Ascending aorta (tissue), 2 donors: ENCODE measurements at regions of chr9 and their contacts with region 1.

Region 1: DNA sequence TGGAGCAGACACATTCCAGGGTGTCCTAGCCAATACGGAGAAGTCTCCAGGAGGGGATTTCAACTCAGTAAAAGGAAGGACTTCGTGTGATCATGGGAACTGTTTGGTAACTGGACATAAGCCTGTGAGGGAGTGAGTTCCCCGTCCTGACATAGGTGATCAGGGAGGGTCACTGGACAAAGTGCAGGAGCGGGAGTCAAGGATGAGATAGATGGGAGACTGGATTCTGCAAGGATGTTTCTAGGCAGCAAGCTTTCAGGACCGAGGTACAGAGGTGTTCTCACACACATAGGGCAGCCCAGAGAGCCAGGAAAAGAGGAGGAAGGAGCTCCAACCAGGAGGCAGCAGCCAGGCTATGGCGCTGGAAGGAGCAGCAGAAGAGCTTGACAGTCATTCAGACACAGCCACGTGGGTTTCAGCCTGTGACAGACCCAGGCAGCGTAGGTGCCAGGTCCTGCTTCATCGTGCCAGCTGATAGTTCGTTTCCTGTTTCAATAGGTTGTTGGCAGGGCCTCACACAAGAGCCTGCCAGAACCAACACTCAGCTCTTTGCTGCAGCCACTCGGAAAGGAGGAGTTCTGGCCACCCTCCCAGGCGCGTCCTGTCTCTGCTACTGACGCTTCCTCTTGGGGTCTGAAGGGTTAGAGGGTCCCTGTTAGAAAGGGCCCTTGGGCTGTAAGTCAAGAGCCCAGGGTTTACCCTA is 84.1 kb downstream of the AMBP start:
- DNase-seq: peak; percentile 69 to 96
- H3K4me3 ChIP-seq: peak overlapping the region in 1 of 2 donors; percentile 32
- H3K27ac ChIP-seq: peak overlapping the region; percentile 50 to 67
- H3K4me1 ChIP-seq: peaks cover 34 to 53% of the 10 kb centered on the region in 2 donors
- H3K27me3 ChIP-seq: no peaks in the 10 kb centered on the region
- CTCF ChIP-seq: no peak

Region 2: GRCh38 chr9:113929634-113930389 is 64.2 kb before region 1 on chr9:
- intact Hi-C with region 1: loop called (anchors 2 kb)
- DNase-seq: no peak
- H3K4me3 ChIP-seq: no peak overlapping the region
- H3K27ac ChIP-seq: peak overlapping the region; percentile 70 to 77
- H3K4me1 ChIP-seq: peaks cover 5 to 34% of the 10 kb centered on the region in 2 donors
- H3K27me3 ChIP-seq: no peaks in the 10 kb centered on the region
- CTCF ChIP-seq: no peak